Activated T-helper 1 cell treated with anti-CD3 and anti-CD28 coated beads, Interleukin-12 subunit alpha, Interleukin-12 subunit beta, Interleukin-2, Interleukin-4 antibody, amounts not matched to agents 30 ng/mL and 10 ng/mL and 1 ng/mL, durations not matched to agents 14 hours and 24 hours and 36 hours (primary cell): ENCODE measurements at regions of chr4 and their contacts with region 1.

Region 1: GRCh38 chr4:26028793-26029567 is 115.0 kb downstream of the SMIM20 start:
- DNase-seq: peak; percentile 60
- H3K4me3 Mint-ChIP-seq: no peak overlapping the region
- H3K27ac Mint-ChIP-seq: peak overlapping the region; percentile 65
- H3K4me1 Mint-ChIP-seq: peaks cover 19% of the 10 kb centered on the region
- H3K27me3 Mint-ChIP-seq: no peaks in the 10 kb centered on the region

Region 2: GRCh38 chr4:25925486-25926201 is 103.3 kb before region 1 on chr4:
- intact Hi-C with region 1: no loop called
- DNase-seq: no peak
- H3K4me3 Mint-ChIP-seq: no peak overlapping the region
- H3K27ac Mint-ChIP-seq: no peak overlapping the region
- H3K4me1 Mint-ChIP-seq: peaks cover 6% of the 10 kb centered on the region
- H3K27me3 Mint-ChIP-seq: no peaks in the 10 kb centered on the region

Region 3: GRCh38 chr4:26141911-26142638 is 113.1 kb after region 1 on chr4:
- intact Hi-C with region 1: loop called (anchors 2 kb)
- DNase-seq: no peak
- H3K4me3 Mint-ChIP-seq: peak overlapping the region; percentile 3
- H3K27ac Mint-ChIP-seq: peak overlapping the region; percentile 78
- H3K4me1 Mint-ChIP-seq: peaks cover 67% of the 10 kb centered on the region
- H3K27me3 Mint-ChIP-seq: no peaks in the 10 kb centered on the region

Region 4: GRCh38 chr4:26217961-26218676 is 189.1 kb after region 1 on chr4:
- intact Hi-C with region 1: no loop called
- DNase-seq: no peak
- H3K4me3 Mint-ChIP-seq: no peak overlapping the region
- H3K27ac Mint-ChIP-seq: no peak overlapping the region
- H3K4me1 Mint-ChIP-seq: peaks cover 18% of the 10 kb centered on the region
- H3K27me3 Mint-ChIP-seq: peaks cover 10% of the 10 kb centered on the region

Region 5: DNA sequence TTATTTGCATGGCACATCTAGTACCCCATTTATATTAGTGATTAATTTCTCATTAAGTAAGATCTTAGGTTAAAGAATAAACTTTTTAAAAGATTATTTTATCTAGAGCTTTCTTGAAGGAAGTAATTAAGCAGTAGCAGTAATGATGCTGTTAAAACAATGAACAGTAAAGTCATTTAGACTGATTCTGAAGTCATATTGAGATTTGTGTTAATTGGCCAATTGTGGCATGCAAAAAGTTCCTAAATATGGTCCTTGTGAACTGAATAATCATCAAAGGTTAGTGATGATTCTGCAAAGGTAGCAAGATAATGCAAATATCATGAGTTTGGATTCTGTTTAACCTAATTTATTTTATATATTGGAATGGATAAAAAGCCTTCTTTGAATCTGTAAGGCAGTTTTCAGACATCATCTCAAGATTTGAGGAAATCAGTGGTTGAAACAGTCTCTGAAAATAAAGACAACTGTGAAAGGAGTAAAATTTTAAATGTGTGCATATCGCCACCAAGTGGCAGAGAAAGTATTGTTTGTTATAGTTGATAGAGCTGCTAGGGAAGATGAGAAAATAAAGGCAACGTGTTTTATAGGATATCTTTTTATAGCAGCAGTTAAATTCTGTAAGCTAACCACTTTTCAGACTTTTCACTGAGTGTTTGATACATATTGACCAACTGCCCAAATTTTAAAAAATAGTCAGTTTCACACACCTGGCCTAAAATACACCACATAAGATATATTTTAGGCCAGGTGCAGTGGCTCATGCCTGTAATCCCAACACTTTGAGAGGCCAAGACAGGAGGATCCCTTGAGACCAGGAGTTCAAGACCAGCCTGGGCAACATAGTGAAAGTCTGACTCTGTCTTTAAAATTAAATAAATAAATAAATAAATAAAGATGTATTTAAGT is 381.7 kb after region 1 on chr4:
- intact Hi-C with region 1: loop called (anchors 1 kb)
- DNase-seq: peak; percentile 19
- H3K4me3 Mint-ChIP-seq: no peak overlapping the region
- H3K27ac Mint-ChIP-seq: no peak overlapping the region
- H3K4me1 Mint-ChIP-seq: peaks cover 25% of the 10 kb centered on the region
- H3K27me3 Mint-ChIP-seq: no peaks in the 10 kb centered on the region

Region 6: GRCh38 chr4:26583865-26584652 is 555.1 kb after region 1 on chr4 and contains the start of gene TBC1D19:
- intact Hi-C with region 1: loop called (anchors 10 kb)
- DNase-seq: peak; percentile 85
- H3K4me3 Mint-ChIP-seq: peak within 1 kb of the TSS; percentile 93
- H3K27ac Mint-ChIP-seq: peak within 1 kb of the TSS; percentile 93
- H3K4me1 Mint-ChIP-seq: peaks cover 37% of the 10 kb centered on the region
- H3K27me3 Mint-ChIP-seq: peaks cover 2% of the 10 kb centered on the region
- total RNA-seq, gene TBC1D19: 4.3 and 4.7 TPM in 2 replicates

Region 7: GRCh38 chr4:27010334-27010940 is 981.5 kb after region 1 on chr4:
- intact Hi-C with region 1: loop called (anchors 1 kb)
- DNase-seq: no peak
- H3K4me3 Mint-ChIP-seq: no peak overlapping the region
- H3K27ac Mint-ChIP-seq: no peak overlapping the region
- H3K4me1 Mint-ChIP-seq: peaks cover 4% of the 10 kb centered on the region
- H3K27me3 Mint-ChIP-seq: no peaks in the 10 kb centered on the region